ENCODE measurements at regions of chr2 and their contacts with region 1.

Region 1: GRCh38 chr2:173402405-173402974 is 47.8 kb downstream of the CDCA7 start:
- DNase-seq: peak; percentile 86 to 89
- H3K4me3 ChIP-seq: no peak overlapping the region
- H3K4me3 Mint-ChIP-seq: peak overlapping the region; percentile 45
- H3K27ac Mint-ChIP-seq: no peak overlapping the region
- H3K4me1 ChIP-seq: no peaks in the 10 kb centered on the region
- H3K4me1 Mint-ChIP-seq: peaks cover 13% of the 10 kb centered on the region
- H3K27me3 ChIP-seq: no peaks in the 10 kb centered on the region
- H3K27me3 Mint-ChIP-seq: peaks cover 12% of the 10 kb centered on the region
- CTCF ChIP-seq: peak; percentile 86 to 91

Region 2: DNA sequence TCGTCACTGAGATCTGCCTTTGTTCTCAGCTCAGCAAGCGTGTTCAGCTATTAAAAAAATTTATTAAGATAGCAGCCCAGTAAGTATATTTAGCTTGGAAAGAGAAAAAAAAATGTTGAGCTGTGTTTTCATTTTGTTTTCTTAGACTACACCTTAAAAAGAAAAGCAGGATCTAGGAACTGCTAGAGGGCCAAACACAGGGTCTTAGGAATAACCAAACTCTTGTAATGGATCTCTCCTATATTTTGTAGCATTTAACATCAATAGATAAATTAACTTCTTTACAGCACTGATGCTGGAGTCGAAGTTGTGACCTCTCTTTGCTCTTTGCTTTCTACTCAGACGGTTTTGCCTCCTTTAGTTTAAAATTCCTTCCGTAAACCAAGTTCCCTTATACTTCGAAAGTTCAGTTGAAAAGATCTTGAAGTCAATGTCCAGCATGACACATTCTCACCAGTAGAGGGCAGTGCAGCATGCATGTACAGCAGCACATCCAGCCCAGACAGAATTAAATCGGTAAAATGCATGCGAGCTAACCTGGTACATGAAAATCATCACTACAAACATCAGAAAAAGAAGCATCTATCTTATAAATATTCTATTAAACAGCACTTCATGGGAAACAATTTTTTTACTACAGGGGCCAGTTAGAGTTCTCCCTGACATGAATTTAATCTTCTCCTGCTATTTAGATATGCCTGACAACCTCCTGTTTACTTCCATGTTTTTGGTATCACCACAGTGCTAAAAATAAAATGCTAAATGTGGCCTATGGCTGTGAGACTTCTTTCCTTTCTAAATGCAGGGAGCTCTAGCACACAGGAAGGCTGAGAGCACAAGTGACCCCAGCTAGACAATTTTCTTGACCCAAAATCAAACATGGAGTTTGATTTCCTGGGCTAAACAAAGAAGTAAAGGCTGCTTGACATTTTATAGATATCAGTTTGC is 375.0 kb before region 1 on chr2:
- CTCF ChIA-PET with region 1: interaction called, 3 read pairs
- POLR2A ChIA-PET with region 1: no interaction called
- intact Hi-C with region 1: loop called (anchors 2 kb)
- DNase-seq: peak; percentile 74 to 85
- H3K4me3 ChIP-seq: no peak overlapping the region
- H3K4me3 Mint-ChIP-seq: peak overlapping the region; percentile 15
- H3K27ac Mint-ChIP-seq: peak overlapping the region; percentile 39
- H3K4me1 ChIP-seq: peaks cover 19% of the 10 kb centered on the region
- H3K4me1 Mint-ChIP-seq: peaks cover 17% of the 10 kb centered on the region
- H3K27me3 ChIP-seq: no peaks in the 10 kb centered on the region
- H3K27me3 Mint-ChIP-seq: no peaks in the 10 kb centered on the region
- CTCF ChIP-seq: peak; percentile 94

Region 3: GRCh38 chr2:173448938-173449471 is 46.5 kb after region 1 on chr2:
- CTCF ChIA-PET with region 1: interaction called, 19 read pairs
- POLR2A ChIA-PET with region 1: no interaction called
- intact Hi-C with region 1: loop called (anchors 1 kb)
- DNase-seq: peak; percentile 89 to 90
- H3K4me3 ChIP-seq: peak overlapping the region; percentile 42
- H3K4me3 Mint-ChIP-seq: peak overlapping the region; percentile 68
- H3K27ac Mint-ChIP-seq: no peak overlapping the region
- H3K4me1 ChIP-seq: no peaks in the 10 kb centered on the region; the same call in 1 of the 2 replicates
- H3K4me1 Mint-ChIP-seq: no peaks in the 10 kb centered on the region
- H3K27me3 ChIP-seq: no peaks in the 10 kb centered on the region
- H3K27me3 Mint-ChIP-seq: peaks cover 7% of the 10 kb centered on the region
- CTCF ChIP-seq: peak; percentile 85 to 89

Region 4: DNA sequence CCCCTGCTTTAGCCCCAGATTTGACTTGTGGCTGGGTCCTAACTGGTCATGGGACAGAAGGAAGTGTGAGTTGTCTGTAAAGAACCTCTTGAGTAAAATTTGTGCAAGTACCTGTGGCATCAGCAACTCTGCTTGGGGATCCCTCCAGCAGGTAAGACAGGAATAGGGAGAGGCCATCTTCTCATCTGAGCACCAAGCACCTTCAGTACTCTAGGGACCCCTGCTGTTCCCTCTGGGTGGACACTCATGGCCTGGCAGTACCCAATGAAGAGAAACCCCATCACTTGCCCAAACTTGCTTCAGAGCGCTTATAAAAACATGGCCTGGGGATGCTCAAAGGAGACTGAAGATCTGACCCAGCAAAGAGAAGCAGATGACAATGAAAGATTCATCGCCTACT is 264.9 kb after region 1 on chr2:
- CTCF ChIA-PET with region 1: no interaction called
- POLR2A ChIA-PET with region 1: no interaction called
- intact Hi-C with region 1: loop called (anchors 1 kb)
- DNase-seq: peak; percentile 46 to 55
- H3K4me3 ChIP-seq: no peak overlapping the region
- H3K4me3 Mint-ChIP-seq: no peak overlapping the region
- H3K27ac Mint-ChIP-seq: no peak overlapping the region
- H3K4me1 ChIP-seq: peaks cover 6% of the 10 kb centered on the region; the same call in 1 of the 2 replicates
- H3K4me1 Mint-ChIP-seq: no peaks in the 10 kb centered on the region
- H3K27me3 ChIP-seq: no peaks in the 10 kb centered on the region; the same call in 1 of the 2 replicates
- H3K27me3 Mint-ChIP-seq: no peaks in the 10 kb centered on the region
- CTCF ChIP-seq: peak; percentile 35 to 54